CD4-positive, alpha-beta T cell (primary cell): ENCODE measurements at regions of chr17 and their contacts with region 1.

Region 1: GRCh38 chr17:41417576-41418015 is 6.8 kb downstream of the KRT37 start:
- DNase-seq: peak in 2 of 14 experiments; percentile 15 to 24
- ATAC-seq: no peak
- H3K4me3 ChIP-seq: no peak overlapping the region
- H3K4me3 Mint-ChIP-seq: no peak overlapping the region
- H3K27ac ChIP-seq: no peak overlapping the region
- H3K27ac Mint-ChIP-seq: no peak overlapping the region
- H3K4me1 ChIP-seq: no peaks in the 10 kb centered on the region
- H3K4me1 Mint-ChIP-seq: no peaks in the 10 kb centered on the region
- H3K27me3 ChIP-seq: no peaks in the 10 kb centered on the region
- H3K27me3 Mint-ChIP-seq: no peaks in the 10 kb centered on the region
- CTCF ChIP-seq: peak; percentile 16

Region 2: GRCh38 chr17:41474863-41475262 is 57.3 kb after region 1 on chr17:
- CTCF ChIA-PET with region 1: no interaction called
- POLR2A ChIA-PET with region 1: no interaction called
- intact Hi-C with region 1: loop called in 1 of 2 experiments (anchors 5 kb)
- DNase-seq: no peak
- ATAC-seq: no peak
- H3K4me3 ChIP-seq: no peak overlapping the region
- H3K4me3 Mint-ChIP-seq: no peak overlapping the region
- H3K27ac ChIP-seq: no peak overlapping the region
- H3K27ac Mint-ChIP-seq: no peak overlapping the region
- H3K4me1 ChIP-seq: no peaks in the 10 kb centered on the region
- H3K4me1 Mint-ChIP-seq: no peaks in the 10 kb centered on the region
- H3K27me3 ChIP-seq: no peaks in the 10 kb centered on the region
- H3K27me3 Mint-ChIP-seq: peaks cover 4% of the 10 kb centered on the region
- CTCF ChIP-seq: no peak